Activated naive CD4-positive, alpha-beta T cell treated with anti-CD3 and anti-CD28 coated beads for 36 hours (primary cell): ENCODE measurements at regions of chr5 and their contacts with region 1.

Region 1: DNA sequence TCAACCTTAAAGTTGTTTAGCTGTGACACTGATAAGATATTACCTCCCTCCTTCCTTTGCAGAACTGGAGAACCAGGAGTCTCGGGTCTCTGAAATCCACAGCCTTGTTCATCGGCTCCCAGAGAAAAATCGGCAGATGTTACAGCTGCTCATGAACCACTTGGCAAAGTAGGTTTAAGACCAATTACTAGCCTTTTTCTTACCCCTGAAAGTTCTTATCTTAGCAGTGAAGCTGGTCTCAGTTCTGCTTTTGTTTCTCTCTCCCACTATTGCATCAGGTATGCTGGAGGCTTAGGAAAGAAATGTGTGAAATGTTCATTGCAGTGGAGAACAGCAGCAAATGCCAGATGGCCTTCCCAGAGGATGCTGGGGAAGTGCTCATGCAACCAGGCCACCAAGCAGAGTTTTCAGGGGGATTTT is 287.4 kb downstream of the ARHGAP26 start:
- DNase-seq: no peak
- H3K4me3 Mint-ChIP-seq: no peak overlapping the region
- H3K27ac Mint-ChIP-seq: peak overlapping the region; percentile 92
- H3K4me1 Mint-ChIP-seq: peaks cover 63% of the 10 kb centered on the region
- H3K27me3 Mint-ChIP-seq: no peaks in the 10 kb centered on the region

Region 2: GRCh38 chr5:141951332-141951781 is 1106.2 kb before region 1 on chr5:
- CTCF ChIA-PET with region 1: no interaction called
- intact Hi-C with region 1: no loop called
- DNase-seq: peak; percentile 41
- H3K4me3 Mint-ChIP-seq: no peak overlapping the region
- H3K27ac Mint-ChIP-seq: no peak overlapping the region
- H3K4me1 Mint-ChIP-seq: peaks cover 7% of the 10 kb centered on the region
- H3K27me3 Mint-ChIP-seq: no peaks in the 10 kb centered on the region

Region 3: GRCh38 chr5:142977363-142978051 is 80.1 kb before region 1 on chr5:
- CTCF ChIA-PET with region 1: no interaction called
- intact Hi-C with region 1: no loop called
- DNase-seq: peak; percentile 73
- H3K4me3 Mint-ChIP-seq: peak overlapping the region; percentile 8
- H3K27ac Mint-ChIP-seq: peak overlapping the region; percentile 81
- H3K4me1 Mint-ChIP-seq: peaks cover 49% of the 10 kb centered on the region
- H3K27me3 Mint-ChIP-seq: no peaks in the 10 kb centered on the region

Region 4: DNA sequence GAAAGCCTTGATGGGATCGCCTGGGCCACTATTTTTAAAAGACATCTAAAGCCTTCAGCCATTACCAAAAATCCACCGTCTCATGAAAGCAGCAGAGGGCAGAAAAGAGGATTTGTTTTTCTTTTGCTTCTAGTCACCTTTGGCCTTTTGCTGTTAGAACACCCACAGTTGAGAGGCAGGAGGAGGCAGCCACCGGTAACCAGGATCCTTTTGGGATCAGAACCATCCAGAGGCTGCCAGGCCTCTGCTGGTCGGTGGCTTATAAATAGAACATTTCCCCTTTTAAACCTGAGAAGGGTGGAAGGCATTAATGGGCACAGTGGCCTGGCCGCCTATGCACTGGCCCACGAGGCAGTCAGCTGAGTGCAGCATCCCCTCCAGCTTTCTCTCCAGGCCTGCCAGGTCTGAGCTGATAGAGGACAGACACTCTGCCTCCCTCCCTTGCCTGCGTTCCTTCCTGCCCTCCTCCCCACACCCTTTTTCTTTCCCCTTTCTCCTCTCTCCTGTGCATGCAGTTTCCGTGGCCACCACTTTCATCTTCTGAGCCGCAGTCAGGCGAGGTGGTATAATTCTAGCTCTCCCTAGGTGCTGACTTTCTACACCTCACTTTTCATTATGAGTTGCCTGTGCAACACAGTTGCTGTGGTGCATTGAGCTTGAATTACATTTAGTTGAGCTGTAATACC is 34.0 kb before region 1 on chr5:
- CTCF ChIA-PET with region 1: interaction called, 3 read pairs
- intact Hi-C with region 1: loop called (anchors 1 kb)
- DNase-seq: peak; percentile 73
- H3K4me3 Mint-ChIP-seq: no peak overlapping the region
- H3K27ac Mint-ChIP-seq: no peak overlapping the region
- H3K4me1 Mint-ChIP-seq: peaks cover 42% of the 10 kb centered on the region
- H3K27me3 Mint-ChIP-seq: no peaks in the 10 kb centered on the region

Region 5: DNA sequence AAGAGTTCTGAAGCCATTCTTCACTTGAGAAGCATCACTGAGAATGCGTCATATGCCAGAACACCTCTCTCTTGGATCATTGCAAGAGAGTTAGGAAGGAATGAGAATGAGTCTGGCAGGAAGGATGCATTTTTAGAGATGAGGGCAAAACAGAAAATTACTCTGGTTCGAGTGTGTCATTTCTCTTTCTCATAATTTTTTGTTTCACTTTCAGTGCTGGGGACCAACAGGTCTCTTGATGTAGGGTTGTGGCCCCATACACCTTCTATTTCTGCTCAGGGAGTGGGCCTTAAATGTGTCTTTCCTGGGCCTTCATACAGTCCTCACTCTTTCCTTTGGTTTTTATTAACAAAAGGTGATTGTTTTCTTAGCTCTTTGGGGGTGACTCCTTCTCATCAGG is 43.5 kb after region 1 on chr5:
- CTCF ChIA-PET with region 1: no interaction called
- intact Hi-C with region 1: loop called (anchors 1 kb)
- DNase-seq: peak; percentile 22
- H3K4me3 Mint-ChIP-seq: peak overlapping the region; percentile 31
- H3K27ac Mint-ChIP-seq: peak overlapping the region; percentile 81
- H3K4me1 Mint-ChIP-seq: peaks cover 25% of the 10 kb centered on the region
- H3K27me3 Mint-ChIP-seq: no peaks in the 10 kb centered on the region

Region 6: DNA sequence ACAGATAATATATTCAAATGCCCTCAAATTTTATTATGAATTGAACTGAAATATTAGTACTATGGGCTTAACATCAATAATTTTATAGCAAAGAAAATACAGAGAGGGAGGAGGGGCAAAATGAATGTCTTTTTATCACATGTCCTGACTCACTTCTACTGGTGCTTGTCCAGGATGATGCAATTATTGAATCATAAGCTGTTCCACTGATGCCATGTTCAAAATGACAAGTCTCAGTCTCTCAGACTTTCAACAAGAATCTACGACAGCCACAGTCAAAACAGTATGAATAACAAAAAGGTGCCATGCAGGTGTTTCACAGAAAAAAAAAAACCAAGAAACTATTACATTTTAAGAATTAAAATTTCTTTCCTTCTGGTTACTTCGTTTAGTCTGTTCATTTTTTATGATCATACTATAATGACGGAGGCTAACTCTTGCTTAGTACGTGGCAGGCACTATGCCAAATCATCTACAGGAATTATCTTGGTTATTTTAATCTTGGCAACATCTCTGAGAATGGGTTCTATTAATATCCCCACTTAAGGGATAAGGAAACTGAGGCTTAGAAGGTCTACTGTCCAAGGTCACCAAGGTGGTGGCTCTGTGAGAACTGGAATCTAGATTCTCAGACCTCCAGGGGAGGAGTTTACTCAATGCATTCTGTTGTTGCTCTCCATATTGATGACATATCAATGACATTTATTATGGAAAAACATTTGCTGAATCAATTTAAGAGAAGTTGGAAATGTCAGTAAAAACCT is 284.4 kb after region 1 on chr5:
- CTCF ChIA-PET with region 1: no interaction called
- intact Hi-C with region 1: loop called (anchors 1 kb)
- DNase-seq: peak; percentile 21
- H3K4me3 Mint-ChIP-seq: peak overlapping the region; percentile 6
- H3K27ac Mint-ChIP-seq: peak overlapping the region; percentile 72
- H3K4me1 Mint-ChIP-seq: peaks cover 51% of the 10 kb centered on the region
- H3K27me3 Mint-ChIP-seq: no peaks in the 10 kb centered on the region

Region 7: GRCh38 chr5:143435210-143435657 is 377.6 kb after region 1 on chr5:
- CTCF ChIA-PET with region 1: no interaction called
- intact Hi-C with region 1: loop called (anchors 1 kb)
- DNase-seq: peak; percentile 61
- H3K4me3 Mint-ChIP-seq: peak overlapping the region; percentile 83
- H3K27ac Mint-ChIP-seq: peak overlapping the region; percentile 97
- H3K4me1 Mint-ChIP-seq: peaks cover 68% of the 10 kb centered on the region
- H3K27me3 Mint-ChIP-seq: no peaks in the 10 kb centered on the region

Region 8: DNA sequence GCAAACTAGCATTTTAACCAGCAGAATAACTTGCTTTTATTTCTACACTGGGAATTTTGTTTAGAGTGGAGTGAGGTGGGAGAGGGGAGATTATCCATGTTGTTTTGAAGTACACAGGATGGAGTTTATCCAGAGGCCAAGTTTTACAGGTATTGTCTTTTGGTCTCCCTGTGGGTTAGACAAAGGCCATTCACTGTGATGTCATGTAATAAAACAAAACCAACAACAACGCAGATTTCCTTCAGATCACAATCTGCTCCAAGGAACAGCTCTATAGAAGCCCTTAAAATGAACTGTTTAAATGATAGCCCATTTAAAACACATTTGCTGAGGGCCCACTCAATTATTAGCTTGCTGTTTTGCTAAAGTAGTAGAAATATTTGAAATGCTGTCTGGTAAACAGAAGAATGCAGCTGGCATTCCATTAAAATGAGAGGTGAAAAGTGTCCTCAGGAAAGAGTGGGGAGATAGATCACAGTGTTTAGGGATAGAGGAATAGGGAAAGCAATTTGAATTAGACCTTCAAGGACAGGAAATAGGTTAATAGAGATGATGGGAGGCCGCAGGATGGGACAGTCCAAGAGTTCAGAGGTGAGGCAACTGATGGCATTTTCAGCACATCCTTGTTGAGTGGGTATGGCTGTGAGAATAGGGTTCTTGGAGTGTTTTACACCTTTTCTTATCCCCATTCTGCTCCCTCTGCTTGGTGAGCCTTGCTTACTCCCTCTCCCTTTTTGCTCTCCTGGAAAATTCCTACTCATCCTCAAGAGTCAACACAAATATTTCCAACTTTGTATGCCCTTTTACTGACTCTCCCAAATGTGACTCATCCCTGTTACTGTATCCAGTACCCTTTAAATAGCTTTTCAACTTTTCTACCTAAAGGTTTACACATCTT is 486.0 kb after region 1 on chr5:
- CTCF ChIA-PET with region 1: no interaction called
- intact Hi-C with region 1: no loop called
- DNase-seq: no peak
- H3K4me3 Mint-ChIP-seq: no peak overlapping the region
- H3K27ac Mint-ChIP-seq: no peak overlapping the region
- H3K4me1 Mint-ChIP-seq: no peaks in the 10 kb centered on the region
- H3K27me3 Mint-ChIP-seq: no peaks in the 10 kb centered on the region